ENCODE measurements at regions of chr1 and their contacts with region 1.

Region 1: DNA sequence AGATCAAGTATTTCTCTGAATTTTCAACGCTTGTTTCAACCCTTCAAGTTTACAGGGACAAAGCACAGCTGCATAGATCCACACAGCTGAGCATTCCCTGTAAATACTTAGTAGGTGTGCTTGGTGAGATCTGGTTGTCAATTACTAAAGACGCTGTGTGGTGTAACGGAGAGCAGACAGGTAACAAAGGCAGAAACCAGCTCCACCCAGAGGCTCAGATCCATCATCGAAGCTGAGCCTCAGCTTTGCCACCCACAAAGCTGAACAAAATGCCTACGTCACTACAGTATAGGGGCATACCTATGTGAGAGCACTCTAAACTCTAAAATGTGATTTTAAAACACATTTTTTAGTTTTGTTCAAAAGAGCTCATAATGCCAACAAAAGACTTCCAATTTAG is 38.7 kb downstream of the PACC1 start:
- DNase-seq: no peak
- ATAC-seq: no peak
- H3K4me3 ChIP-seq: no peak overlapping the region
- H3K27ac ChIP-seq: no peak overlapping the region
- H3K4me1 ChIP-seq: no peaks in the 10 kb centered on the region
- H3K27me3 ChIP-seq: no peaks in the 10 kb centered on the region
- CTCF ChIP-seq: no peak
- POLR2A ChIP-seq: no peak
- RAD21 ChIP-seq: no peak

Region 2: GRCh38 chr1:212396638-212397037 is 20.7 kb after region 1 on chr1:
- CTCF ChIA-PET with region 1: no interaction called
- POLR2A ChIA-PET with region 1: no interaction called
- dilution Hi-C with region 1: no loop called
- in situ Hi-C with region 1: no loop called
- intact Hi-C with region 1: loop called (anchors 1 kb)
- DNase-seq: no peak
- ATAC-seq: no peak
- H3K4me3 ChIP-seq: no peak overlapping the region
- H3K27ac ChIP-seq: no peak overlapping the region
- H3K4me1 ChIP-seq: no peaks in the 10 kb centered on the region
- H3K27me3 ChIP-seq: no peaks in the 10 kb centered on the region
- CTCF ChIP-seq: no peak
- POLR2A ChIP-seq: no peak
- RAD21 ChIP-seq: no peak

Measured in IMR-90 (cell line).